Activated CD4-positive, alpha-beta memory T cell treated with anti-CD3 and anti-CD28 coated beads for 36 hours (primary cell): ENCODE measurements at regions of chrX and their contacts with region 1.

Region 1: DNA sequence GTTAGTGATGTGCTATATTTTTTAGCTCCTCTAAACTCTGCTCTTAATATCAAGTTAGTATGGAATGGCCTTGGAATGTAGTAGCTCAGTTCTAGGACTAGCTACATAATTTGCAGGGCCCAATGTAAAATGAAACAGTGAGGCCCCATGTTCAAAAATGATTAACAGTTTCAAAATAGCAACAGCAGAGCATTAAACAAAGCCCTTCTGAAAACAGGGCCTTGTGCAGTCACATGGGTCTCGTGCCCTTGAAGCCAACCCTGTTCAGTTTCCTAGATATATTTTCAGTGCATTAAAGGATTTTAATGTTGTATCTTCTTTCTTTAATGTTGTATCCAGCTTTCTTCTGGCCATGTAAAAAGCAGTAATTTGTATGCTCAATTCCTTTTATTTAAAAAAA is 82.1 kb downstream of the TASL start:
- DNase-seq: no peak
- H3K4me3 Mint-ChIP-seq: no peak overlapping the region
- H3K27ac Mint-ChIP-seq: no peak overlapping the region
- H3K4me1 Mint-ChIP-seq: no peaks in the 10 kb centered on the region
- H3K27me3 Mint-ChIP-seq: no peaks in the 10 kb centered on the region

Region 2: GRCh38 chrX:30275498-30275897 is 220.0 kb before region 1 on chrX:
- CTCF ChIA-PET with region 1: no interaction called
- POLR2A ChIA-PET with region 1: no interaction called
- intact Hi-C with region 1: loop called (anchors 10 kb)
- DNase-seq: no peak
- H3K4me3 Mint-ChIP-seq: no peak overlapping the region
- H3K27ac Mint-ChIP-seq: no peak overlapping the region
- H3K4me1 Mint-ChIP-seq: no peaks in the 10 kb centered on the region
- H3K27me3 Mint-ChIP-seq: no peaks in the 10 kb centered on the region